A549 (cell line): ENCODE measurements at regions of chr10 and their contacts with region 1.

Region 1: DNA sequence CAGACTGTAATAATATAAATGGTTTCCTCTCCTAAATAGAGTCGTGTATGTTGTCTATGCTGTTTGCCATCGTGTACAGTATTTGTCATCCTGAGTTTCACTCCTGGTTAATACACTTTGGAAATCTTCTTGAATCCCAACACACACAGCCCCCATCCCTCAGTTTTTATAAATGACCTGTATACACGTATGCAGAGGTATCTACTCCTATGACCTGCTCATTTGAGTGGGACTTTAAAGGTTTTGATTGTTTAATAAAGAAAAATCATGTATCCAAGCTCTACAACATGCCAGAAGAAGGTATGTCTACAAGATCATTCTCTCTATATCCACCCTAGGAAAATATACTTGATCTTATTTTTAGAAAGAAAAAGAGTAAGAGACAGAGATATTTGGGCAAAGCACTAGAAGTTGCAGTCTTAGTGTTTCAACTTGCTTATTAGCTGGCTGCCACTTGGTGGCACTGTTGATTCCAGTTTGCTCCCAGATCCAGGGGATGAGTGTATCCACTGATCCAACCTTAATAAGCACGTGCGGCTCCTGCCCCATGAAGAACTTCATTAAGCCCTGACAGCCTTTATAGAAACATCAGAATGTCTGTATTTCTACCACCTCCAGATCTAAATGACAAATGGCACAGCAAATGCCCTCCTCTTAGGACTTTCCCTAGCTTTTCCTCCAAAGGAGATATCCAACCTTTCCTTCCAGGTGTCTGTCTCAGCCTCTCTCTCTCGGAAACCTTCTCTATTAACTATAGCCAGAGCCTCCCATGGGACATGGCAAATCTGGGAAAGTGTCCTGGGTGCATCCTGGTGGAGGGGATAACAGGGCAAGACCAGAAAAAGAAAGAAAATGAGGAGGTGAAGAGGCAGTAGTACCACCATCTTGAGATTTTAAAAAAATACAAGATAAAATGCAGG is 181.6 kb upstream of the NEBL start:
- DNase-seq: peak; percentile 55 to 81
- ATAC-seq: peak; percentile 95 to 97
- H3K4me3 ChIP-seq: no peak overlapping the region
- H3K27ac ChIP-seq: peak overlapping the region; percentile 74 to 75
- H3K4me1 ChIP-seq: peaks cover 20% of the 10 kb centered on the region
- CTCF ChIP-seq: peak; percentile 92
- EP300 ChIP-seq: no peak
- POLR2A ChIP-seq: no peak
- RAD21 ChIP-seq: peak; percentile 98

Region 2: DNA sequence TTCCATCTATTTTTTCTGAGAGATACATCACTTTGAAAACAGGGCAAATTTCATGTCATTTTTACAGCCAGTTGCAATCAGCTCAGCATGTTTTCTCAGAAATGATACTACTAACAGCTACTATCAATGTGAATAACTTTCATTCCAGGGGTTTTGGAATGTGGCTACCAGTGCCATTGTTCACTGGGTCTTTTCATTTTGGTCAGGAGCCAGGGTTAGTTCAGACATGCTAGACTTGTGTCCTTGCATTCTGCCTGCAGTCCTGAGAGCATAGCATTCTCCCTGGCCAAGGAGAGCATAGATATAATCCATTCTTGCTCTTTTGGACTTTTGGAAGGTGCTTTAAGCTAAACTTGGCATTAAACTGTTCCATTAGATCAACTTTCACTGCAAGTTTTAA is 20.7 kb before region 1 on chr10:
- CTCF ChIA-PET with region 1: interaction called, 10 read pairs
- POLR2A ChIA-PET with region 1: no interaction called
- DNase-seq: no peak
- ATAC-seq: no peak
- H3K4me3 ChIP-seq: no peak overlapping the region
- H3K27ac ChIP-seq: no peak overlapping the region
- H3K4me1 ChIP-seq: no peaks in the 10 kb centered on the region
- CTCF ChIP-seq: no peak
- EP300 ChIP-seq: no peak
- POLR2A ChIP-seq: no peak
- RAD21 ChIP-seq: no peak

Region 3: GRCh38 chr10:21092683-21093524 is 14.2 kb after region 1 on chr10:
- CTCF ChIA-PET with region 1: interaction called, 30 read pairs
- POLR2A ChIA-PET with region 1: no interaction called
- DNase-seq: peak in 1 of 2 experiments; percentile 36
- ATAC-seq: peak in 1 of 2 experiments; percentile 38; a peak in 3 of 6 replicates
- H3K4me3 ChIP-seq: no peak overlapping the region
- H3K27ac ChIP-seq: peak overlapping the region; percentile 63 to 71
- H3K4me1 ChIP-seq: peaks cover 31% of the 10 kb centered on the region
- CTCF ChIP-seq: no peak
- EP300 ChIP-seq: no peak
- POLR2A ChIP-seq: no peak
- RAD21 ChIP-seq: no peak

Region 4: GRCh38 chr10:21173812-21174714 is 95.4 kb after region 1 on chr10:
- CTCF ChIA-PET with region 1: interaction called, 11 read pairs
- POLR2A ChIA-PET with region 1: no interaction called
- DNase-seq: peak; percentile 66 to 82
- ATAC-seq: peak; percentile 80 to 86
- H3K4me3 ChIP-seq: peak overlapping the region; percentile 79
- H3K27ac ChIP-seq: peak overlapping the region; percentile 92 to 94
- H3K4me1 ChIP-seq: peaks cover 29% of the 10 kb centered on the region
- CTCF ChIP-seq: peak; percentile 20; the same call in 2 of the 3 replicates
- EP300 ChIP-seq: peak in 1 of 2 experiments; percentile 25; a peak in 1 of 5 replicates
- POLR2A ChIP-seq: peak; percentile 10; the same call in 1 of the 2 replicates
- RAD21 ChIP-seq: peak; percentile 35 to 54

Region 5: DNA sequence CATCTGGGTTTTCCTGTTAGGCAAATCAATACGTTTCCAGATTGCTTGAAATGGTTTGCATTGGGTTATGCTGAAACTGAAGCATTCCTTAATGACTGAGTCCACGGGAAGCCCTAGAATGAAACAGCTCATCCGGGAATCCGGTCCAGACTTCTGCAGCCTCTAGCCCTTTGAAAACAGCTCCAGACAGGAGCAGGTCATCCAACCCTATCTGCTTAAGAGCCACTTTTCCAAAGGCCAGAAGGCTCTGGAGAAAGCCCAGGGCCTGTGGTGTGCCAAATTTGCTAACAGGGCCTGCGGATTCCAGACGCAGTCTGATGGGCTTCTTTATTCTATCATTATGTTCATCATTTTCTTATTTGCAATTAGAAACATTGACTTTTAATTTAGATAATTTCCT is 181.4 kb after region 1 on chr10:
- CTCF ChIA-PET with region 1: interaction called, 20 read pairs
- POLR2A ChIA-PET with region 1: no interaction called
- DNase-seq: no peak
- ATAC-seq: no peak
- H3K4me3 ChIP-seq: no peak overlapping the region
- H3K27ac ChIP-seq: no peak overlapping the region
- H3K4me1 ChIP-seq: peaks cover 1% of the 10 kb centered on the region
- CTCF ChIP-seq: no peak
- EP300 ChIP-seq: no peak
- POLR2A ChIP-seq: no peak
- RAD21 ChIP-seq: no peak

Region 6: DNA sequence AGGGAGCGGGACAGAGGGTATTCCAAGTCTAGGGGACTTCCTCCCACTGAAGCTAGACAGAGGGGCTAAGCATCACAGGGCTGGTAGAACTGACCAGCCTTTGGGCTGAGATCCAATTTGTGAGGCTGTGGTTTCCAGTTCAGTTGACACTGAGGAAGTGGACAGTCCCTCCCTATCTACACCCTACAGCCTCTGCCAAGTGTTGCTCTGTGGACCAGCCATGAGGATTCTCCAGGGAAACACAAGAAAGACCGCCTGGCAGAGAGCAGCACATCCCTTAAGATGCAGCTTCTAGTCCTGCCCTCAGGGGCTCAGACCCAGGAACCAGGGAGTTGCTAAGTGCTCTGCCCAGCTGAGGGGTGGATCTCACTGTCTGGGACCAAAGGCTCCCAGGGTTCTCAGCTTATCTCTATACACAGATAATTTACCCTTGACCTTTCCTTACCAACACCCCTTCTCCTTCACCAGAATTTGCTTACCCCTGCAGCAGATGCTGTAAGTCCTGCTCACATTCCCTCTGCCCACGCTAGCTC is 194.8 kb after region 1 on chr10:
- CTCF ChIA-PET with region 1: interaction called, 137 read pairs
- POLR2A ChIA-PET with region 1: no interaction called
- DNase-seq: no peak
- ATAC-seq: peak; percentile 28 to 47; a peak in 4 of 6 replicates
- H3K4me3 ChIP-seq: no peak overlapping the region
- H3K27ac ChIP-seq: peak overlapping the region; percentile 63 to 74
- H3K4me1 ChIP-seq: peaks cover 37% of the 10 kb centered on the region
- CTCF ChIP-seq: no peak
- EP300 ChIP-seq: no peak
- POLR2A ChIP-seq: no peak
- RAD21 ChIP-seq: no peak